ENCODE measurements at regions of chr10 and their contacts with region 1.

Region 1: DNA sequence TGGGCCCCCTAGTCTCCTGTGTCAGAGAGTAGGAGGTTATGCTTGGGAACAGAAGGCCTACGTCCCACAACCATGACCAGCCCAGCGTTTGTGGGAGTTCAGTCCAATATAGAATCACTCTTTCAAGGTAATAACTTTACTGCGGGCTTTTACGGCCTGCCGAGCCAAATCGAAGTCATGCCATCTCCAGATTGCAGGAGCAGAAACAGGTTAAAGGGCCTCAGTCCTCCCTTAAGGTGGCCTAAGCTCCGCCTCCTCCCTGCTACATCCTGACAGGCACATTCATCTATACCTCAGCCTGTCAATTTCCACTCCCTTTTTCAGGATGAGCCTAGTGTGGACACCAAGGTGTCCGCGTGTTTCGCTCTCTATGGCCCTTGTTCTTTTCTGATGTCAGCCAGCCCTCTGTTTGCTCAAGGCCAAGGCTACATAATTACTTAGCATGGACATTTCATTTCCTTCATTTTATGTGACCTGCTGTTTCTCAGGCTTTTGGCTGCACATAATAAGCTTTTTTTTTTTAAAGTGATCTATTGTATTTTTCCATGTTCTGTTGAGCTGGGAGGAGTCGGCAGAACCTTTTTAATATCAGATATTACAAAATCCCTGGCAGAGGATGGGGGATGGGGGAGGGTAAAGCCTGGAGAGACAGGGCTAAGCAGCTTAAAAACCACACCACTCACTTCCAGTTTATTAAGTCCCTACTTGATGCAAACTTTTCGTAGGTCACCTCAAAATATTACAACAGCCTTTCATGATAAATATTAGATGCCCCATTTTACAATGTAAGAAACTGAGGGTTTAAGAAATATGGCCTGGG is 84.6 kb downstream of the CACNB2 start:
- DNase-seq: peak; percentile 56 to 63
- ATAC-seq: peak; percentile 96

Region 2: DNA sequence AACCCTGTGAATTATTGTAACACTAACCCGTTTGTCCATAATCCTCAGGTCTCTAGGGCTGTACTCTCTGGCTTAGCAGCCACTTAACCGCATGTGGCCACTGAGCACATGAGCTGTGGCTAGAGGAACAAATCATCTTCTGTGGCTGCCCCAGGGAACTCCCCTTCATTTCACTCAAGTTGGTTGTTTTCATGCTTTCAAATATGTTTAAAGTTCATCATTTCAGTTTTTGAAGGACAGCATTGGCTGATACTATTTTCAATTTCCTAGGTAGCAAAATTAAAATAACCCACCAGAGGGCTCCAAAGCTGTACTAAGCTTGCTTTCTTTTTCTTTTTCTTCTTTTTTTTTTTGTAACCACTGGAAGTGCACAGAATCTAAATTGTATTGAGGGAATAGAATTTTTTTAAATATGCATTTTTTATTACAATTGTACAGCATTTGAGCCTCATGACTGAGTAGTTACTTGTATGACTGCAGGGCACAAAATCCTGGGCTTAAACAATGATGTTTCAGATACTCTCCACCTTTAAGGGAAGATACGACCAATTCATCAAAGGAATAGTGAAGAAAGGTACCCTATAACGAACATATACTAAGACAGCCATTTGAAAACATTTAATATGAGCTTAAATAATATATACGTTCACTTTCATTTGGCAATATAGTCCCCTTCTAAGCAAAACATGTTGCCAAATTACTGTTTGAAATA is 377.1 kb before region 1 on chr10:
- intact Hi-C with region 1: loop called in 1 of 2 experiments (anchors 5 kb)
- DNase-seq: no peak
- ATAC-seq: peak; percentile 26

Measured in left colon (tissue), 2 donors.